ENCODE measurements at regions of chr1 and their contacts with region 1.

Region 1: DNA sequence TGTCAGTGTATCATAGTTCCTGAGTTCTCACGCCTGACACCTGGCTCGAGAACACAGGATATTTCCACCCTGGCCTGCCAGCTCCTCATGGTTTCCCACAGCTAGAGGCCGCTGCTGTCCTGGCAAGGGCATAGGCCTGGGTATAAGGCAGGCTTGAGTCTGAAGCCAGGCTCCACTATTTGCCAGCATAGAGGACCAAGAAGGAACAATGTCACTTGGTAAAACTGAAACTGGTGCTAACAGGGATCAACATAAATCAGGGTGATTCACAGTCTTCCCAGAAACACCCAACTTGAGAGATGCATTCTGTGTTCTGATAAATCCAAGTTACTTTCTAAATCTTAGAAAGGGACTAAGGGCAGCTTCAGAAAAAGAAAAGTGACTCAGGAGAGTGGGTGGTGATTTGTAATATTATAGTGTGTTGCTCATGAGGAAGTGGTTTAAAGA is 6.9 kb upstream of the S100A2 start:
- DNase-seq: peak; percentile 53
- ATAC-seq: peak; percentile 93
- H3K4me3 Mint-ChIP-seq: no peak overlapping the region
- H3K27ac Mint-ChIP-seq: peak overlapping the region; percentile 79
- H3K4me1 Mint-ChIP-seq: peaks cover 27% of the 10 kb centered on the region
- H3K27me3 Mint-ChIP-seq: peaks cover 8% of the 10 kb centered on the region
- CTCF ChIP-seq: no peak

Region 2: DNA sequence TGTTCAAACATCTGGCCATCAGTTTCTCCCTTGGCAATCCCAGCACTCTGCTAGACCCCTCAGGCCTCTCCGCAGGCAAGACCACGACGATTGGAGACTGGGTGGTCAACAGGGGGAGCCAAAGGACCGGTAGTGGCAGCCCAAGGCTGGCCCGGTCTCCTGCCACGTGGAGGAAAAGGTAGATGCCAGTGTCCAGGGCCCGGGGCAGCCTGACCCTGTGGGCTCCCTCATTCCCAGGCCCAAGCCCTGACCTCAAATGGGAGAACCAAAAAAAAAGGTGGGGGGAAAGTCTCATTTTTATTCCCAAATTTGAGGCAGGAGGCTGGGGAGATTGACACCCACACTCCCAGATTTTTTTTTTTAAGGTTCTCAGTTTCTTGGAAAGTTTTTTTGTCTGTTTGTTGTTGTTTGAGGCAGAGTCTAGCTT is 61.6 kb before region 1 on chr1:
- CTCF ChIA-PET with region 1: interaction called, 113 read pairs
- POLR2A ChIA-PET with region 1: interaction called, 4 read pairs
- intact Hi-C with region 1: loop called (anchors 1 kb)
- DNase-seq: peak; percentile 67
- ATAC-seq: peak; percentile 97
- H3K4me3 Mint-ChIP-seq: no peak overlapping the region
- H3K27ac Mint-ChIP-seq: no peak overlapping the region
- H3K4me1 Mint-ChIP-seq: peaks cover 4% of the 10 kb centered on the region
- H3K27me3 Mint-ChIP-seq: no peaks in the 10 kb centered on the region
- CTCF ChIP-seq: peak; percentile 81

Region 3: GRCh38 chr1:153545067-153546055 is 27.2 kb before region 1 on chr1 and contains the start of gene S100A4:
- CTCF ChIA-PET with region 1: interaction called, 9 read pairs
- POLR2A ChIA-PET with region 1: interaction called, 10 read pairs
- intact Hi-C with region 1: no loop called
- DNase-seq: peak; percentile 56
- ATAC-seq: peak; percentile 78
- H3K4me3 Mint-ChIP-seq: peak within 1 kb of the TSS; percentile 95
- H3K27ac Mint-ChIP-seq: peak within 1 kb of the TSS; percentile 97
- H3K4me1 Mint-ChIP-seq: peaks cover 58% of the 10 kb centered on the region
- H3K27me3 Mint-ChIP-seq: peaks cover 2% of the 10 kb centered on the region
- CTCF ChIP-seq: no peak
- total RNA-seq, gene S100A4: 315 and 398 TPM in 2 replicates

Region 4: DNA sequence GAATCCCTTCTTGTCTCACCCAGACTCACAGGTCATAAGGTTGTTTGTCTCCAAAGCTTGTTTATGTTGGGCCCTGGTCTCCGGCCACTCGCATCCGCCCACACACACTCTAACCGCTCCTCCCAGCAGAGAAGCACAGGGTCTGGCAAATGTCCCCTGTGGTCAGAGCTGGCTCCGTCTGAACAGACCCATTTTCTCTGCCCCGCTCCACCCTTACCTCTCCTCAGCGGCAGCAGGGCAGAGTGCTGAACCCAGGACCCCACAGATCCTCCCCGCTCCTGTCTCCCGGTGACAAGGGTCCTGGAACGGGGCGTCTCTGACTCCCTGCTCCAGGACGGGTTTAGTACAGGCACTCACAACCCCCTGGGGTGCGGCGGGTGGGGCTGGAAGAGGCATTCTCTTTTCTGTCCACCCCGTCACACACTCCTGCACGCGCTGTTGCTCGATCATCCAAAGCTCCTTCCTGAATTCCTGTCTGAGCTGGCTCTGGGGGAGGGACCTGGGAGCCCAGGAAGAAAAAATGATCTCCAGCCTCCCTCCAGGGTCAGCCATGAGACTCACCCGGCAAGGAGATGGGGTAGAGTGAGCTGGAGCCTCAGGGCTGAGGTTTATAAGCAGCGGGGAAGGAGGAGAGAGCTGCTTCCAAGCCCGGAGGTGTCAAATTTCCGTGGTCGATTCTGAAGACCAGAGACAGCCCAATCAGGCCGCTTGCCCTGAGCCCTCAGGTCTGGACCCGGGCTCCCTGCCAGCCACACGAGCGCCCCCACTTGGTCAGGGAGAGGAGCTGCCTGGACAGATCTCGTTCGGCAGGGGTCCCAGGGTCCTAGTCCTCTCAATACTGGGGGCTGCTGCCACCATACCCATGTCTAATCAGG is 54.6 kb after region 1 on chr1 and contains the start of gene S100A13:
- CTCF ChIA-PET with region 1: interaction called, 38 read pairs
- POLR2A ChIA-PET with region 1: interaction called, 6 read pairs
- intact Hi-C with region 1: loop called (anchors 2 kb)
- DNase-seq: no peak
- ATAC-seq: peak; percentile 56
- H3K4me3 Mint-ChIP-seq: peak within 1 kb of the TSS; percentile 60
- H3K27ac Mint-ChIP-seq: no peak within 1 kb of the TSS
- H3K4me1 Mint-ChIP-seq: peaks cover 32% of the 10 kb centered on the region
- H3K27me3 Mint-ChIP-seq: no peaks in the 10 kb centered on the region
- CTCF ChIP-seq: no peak
- total RNA-seq, gene S100A13: 16.2 and 17.6 TPM in 2 replicates

Region 5: DNA sequence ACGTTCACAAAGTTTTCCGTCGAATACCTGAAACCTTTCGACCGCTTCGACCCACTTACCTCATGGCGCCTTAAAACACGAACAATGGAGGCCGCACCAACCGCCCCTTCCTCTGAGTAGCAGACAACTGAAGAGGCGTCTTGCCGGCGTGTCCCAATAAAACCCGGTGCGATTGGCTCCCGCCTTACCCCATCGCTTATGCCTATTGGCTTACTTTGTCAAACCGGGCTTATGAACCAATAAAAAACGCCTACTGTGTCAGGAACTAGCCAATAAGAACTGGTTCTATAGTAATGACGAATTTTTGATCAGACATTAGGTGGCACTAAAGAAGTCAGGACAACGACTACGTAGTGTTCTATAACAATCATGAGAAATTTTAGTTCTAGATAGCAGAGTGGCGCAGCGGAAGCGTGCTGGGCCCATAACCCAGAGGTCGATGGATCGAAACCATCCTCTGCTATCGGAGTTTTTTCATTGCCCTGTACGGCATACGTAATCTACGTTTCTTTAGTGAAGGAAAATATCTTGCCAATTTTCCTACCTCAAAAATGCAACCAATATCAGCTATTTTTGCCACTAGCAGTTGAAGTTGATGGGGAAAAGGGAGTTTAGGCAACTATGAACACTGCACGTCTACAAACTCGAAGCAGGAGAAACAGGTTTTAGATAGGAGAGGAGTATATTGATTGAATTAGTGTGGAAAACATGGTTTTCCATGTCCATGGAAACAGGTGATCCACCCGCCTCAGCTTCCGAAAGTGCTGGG is 98.5 kb after region 1 on chr1 and contains the start of gene ILF2:
- CTCF ChIA-PET with region 1: interaction called, 16 read pairs
- POLR2A ChIA-PET with region 1: interaction called, 14 read pairs
- intact Hi-C with region 1: loop called (anchors 1 kb)
- DNase-seq: peak; percentile 85
- ATAC-seq: peak; percentile 83
- H3K4me3 Mint-ChIP-seq: no peak within 1 kb of the TSS
- H3K27ac Mint-ChIP-seq: no peak within 1 kb of the TSS
- H3K4me1 Mint-ChIP-seq: peaks cover 28% of the 10 kb centered on the region
- H3K27me3 Mint-ChIP-seq: no peaks in the 10 kb centered on the region
- CTCF ChIP-seq: no peak
- total RNA-seq, gene ILF2: 182 and 191 TPM in 2 replicates

Region 6: GRCh38 chr1:153727463-153728304 is 155.1 kb after region 1 on chr1 and contains the start of gene INTS3:
- CTCF ChIA-PET with region 1: no interaction called
- POLR2A ChIA-PET with region 1: interaction called, 15 read pairs
- intact Hi-C with region 1: no loop called
- DNase-seq: peak; percentile 90
- ATAC-seq: peak; percentile 96
- H3K4me3 Mint-ChIP-seq: peak within 1 kb of the TSS; percentile 97
- H3K27ac Mint-ChIP-seq: peak within 1 kb of the TSS; percentile 96
- H3K4me1 Mint-ChIP-seq: peaks cover 39% of the 10 kb centered on the region
- H3K27me3 Mint-ChIP-seq: no peaks in the 10 kb centered on the region
- CTCF ChIP-seq: no peak
- total RNA-seq, gene INTS3: 81.1 and 88.6 TPM in 2 replicates

Region 7: DNA sequence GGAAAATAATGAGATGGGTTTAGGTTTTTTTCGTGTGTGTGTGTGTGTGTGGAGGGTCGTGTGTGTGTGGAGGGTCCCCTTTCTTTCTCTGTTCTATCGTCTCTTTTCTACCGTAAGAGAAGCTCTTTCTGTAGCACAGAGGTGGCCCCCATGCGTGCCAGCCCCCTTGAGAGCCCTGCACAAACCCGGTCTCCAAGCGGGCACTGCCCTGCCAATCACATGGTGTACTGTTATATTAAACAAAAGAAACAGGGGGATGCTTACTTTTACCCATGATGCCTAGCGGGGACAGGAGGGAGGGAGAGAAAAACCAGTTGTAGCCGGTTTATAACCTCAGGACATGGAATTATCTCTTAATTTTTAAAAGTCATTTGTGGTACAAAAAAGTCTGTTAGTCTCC is 309.2 kb after region 1 on chr1:
- CTCF ChIA-PET with region 1: no interaction called
- POLR2A ChIA-PET with region 1: no interaction called
- intact Hi-C with region 1: no loop called
- DNase-seq: no peak
- ATAC-seq: no peak
- H3K4me3 Mint-ChIP-seq: no peak overlapping the region
- H3K27ac Mint-ChIP-seq: no peak overlapping the region
- H3K4me1 Mint-ChIP-seq: peaks cover 25% of the 10 kb centered on the region
- H3K27me3 Mint-ChIP-seq: no peaks in the 10 kb centered on the region
- CTCF ChIP-seq: no peak